ENCODE measurements at regions of chr18 and their contacts with region 1.

Region 1: DNA sequence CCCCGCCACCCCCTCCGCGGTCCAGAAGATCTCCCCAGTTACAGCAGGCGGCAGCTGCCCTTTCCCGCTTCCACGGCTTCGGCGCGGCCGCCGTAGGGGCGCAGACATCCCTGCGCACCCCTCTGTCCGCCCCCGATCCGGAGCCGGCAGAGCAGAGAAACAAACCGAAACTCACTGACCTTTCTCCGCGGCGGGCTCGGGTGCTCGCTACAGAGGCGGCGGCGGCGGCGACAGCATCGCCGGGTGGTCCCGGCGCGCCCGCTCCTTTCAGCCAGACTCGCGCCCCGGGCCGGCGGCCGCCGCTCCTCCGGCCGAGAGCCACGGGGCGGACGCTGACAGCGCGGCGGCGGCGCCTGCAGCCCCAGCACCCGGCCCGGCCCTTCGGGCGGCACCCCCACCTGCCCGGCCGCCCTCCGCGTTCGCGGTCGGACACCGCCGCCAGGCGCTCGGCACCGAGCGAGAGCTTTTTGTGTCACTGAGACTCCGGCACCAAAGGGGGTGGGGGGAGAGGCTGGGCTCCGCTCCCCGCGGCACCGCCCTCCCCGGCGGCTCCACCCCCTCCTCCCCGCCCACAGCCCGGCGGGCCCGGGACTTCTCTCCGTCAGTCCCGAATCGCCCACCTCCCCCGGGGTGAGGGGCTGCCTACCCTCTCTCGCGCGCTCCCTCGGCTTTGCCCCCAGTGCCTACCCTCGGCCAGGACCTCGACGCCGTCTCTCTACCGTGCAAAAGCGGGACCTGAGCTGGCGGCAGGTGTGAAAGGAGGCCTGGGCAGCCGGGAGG is 1.4 kb upstream of the RNF152 start:
- DNase-seq: peak; percentile 87 to 92 (median 89)
- ATAC-seq: peak; percentile 92 to 95 (median 94)
- H3K4me3 ChIP-seq: peak overlapping the region; percentile 74 to 99 (median 93)
- H3K27ac ChIP-seq: peak overlapping the region; percentile 80 to 97 (median 90)
- H3K4me1 ChIP-seq: peaks cover 0 to 43% (median 8%) of the 10 kb centered on the region in 12 donors
- H3K27me3 ChIP-seq: peaks cover 0 to 38% (median 0%) of the 10 kb centered on the region in 9 donors
- CTCF ChIP-seq: peak; percentile 7 to 67 (median 46)
- POLR2A ChIP-seq: peak in 1 of 2 donors; percentile 70

Region 2: DNA sequence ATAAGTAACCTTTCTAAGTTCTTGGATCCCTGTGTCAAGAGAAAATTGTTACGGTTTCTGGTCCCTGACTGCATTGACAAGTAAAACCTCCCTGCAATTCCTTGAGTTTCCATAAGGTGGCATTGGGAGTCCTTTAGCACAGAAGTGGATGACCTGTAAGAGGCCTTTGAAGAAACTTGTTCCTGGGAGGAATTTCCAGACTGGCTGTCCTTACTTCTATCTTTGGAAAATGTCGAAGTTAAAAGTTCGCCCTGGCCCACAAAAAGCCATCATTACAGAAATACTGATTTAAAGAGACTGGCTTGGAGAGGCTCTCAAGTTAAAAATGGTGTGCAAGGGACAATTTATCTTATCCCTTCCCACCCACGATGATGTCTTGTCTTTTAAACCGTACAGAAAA is 342.6 kb before region 1 on chr18:
- intact Hi-C with region 1: loop called in 3 of 10 experiments (anchors 2 to 10 kb)
- DNase-seq: peak in 2 of 5 donors; percentile 47 to 56
- ATAC-seq: peak; percentile 78 to 85 (median 80)
- H3K4me3 ChIP-seq: no peak overlapping the region
- H3K27ac ChIP-seq: no peak overlapping the region
- H3K4me1 ChIP-seq: peaks cover 0 to 8% (median 0%) of the 10 kb centered on the region in 12 donors
- H3K27me3 ChIP-seq: no peaks in the 10 kb centered on the region
- CTCF ChIP-seq: peak; percentile 72 to 92 (median 88)
- POLR2A ChIP-seq: no peak

Region 3: DNA sequence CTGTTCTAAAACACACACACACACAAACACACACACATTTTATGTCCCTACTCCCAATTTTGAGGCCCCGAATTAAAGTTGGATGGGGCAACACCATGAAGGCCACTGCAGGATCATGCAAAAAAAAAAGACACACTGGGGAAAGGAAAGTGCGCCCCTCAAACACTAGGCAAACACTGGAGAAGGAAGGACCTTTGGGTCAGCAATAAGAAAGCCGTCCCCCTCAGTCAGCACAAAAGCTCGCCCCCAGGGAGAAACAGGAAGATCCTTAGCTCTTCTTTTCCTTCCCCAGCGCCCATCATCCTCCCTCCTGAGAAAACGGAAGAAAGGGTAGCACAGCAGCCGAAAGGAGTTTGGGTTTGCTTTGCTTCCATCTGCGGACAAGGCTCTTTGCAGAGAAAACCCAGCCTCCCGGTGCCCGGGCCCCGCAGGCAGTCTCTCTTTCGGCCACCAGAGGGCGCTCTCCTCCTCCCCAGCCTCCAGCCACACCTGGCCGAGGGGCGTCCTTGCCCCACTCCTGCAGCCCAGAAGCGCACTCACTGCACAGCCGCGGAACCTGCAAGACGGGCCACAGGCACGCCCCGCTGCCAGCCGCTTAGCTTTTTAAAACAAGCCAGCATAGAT is 312.5 kb before region 1 on chr18:
- intact Hi-C with region 1: loop called in 6 of 10 experiments (anchors 2 to 10 kb)
- DNase-seq: peak; percentile 73 to 88 (median 75)
- ATAC-seq: peak; percentile 83 to 93 (median 90)
- H3K4me3 ChIP-seq: peak overlapping the region in 11 of 12 donors; percentile 28 to 58 (median 49)
- H3K27ac ChIP-seq: peak overlapping the region in 11 of 12 donors; percentile 55 to 84 (median 71)
- H3K4me1 ChIP-seq: peaks cover 0 to 40% (median 16%) of the 10 kb centered on the region in 12 donors
- H3K27me3 ChIP-seq: no peaks in the 10 kb centered on the region
- CTCF ChIP-seq: peak; percentile 99 to 100 (median 99)
- POLR2A ChIP-seq: no peak

Region 4: GRCh38 chr18:61679836-61680235 is 214.3 kb before region 1 on chr18:
- intact Hi-C with region 1: loop called in 1 of 10 experiments (anchors 5 kb)
- DNase-seq: no peak
- ATAC-seq: no peak
- H3K4me3 ChIP-seq: no peak overlapping the region
- H3K27ac ChIP-seq: no peak overlapping the region
- H3K4me1 ChIP-seq: peaks cover 0 to 2% (median 0%) of the 10 kb centered on the region in 12 donors
- H3K27me3 ChIP-seq: no peaks in the 10 kb centered on the region
- CTCF ChIP-seq: no peak
- POLR2A ChIP-seq: no peak

Region 5: DNA sequence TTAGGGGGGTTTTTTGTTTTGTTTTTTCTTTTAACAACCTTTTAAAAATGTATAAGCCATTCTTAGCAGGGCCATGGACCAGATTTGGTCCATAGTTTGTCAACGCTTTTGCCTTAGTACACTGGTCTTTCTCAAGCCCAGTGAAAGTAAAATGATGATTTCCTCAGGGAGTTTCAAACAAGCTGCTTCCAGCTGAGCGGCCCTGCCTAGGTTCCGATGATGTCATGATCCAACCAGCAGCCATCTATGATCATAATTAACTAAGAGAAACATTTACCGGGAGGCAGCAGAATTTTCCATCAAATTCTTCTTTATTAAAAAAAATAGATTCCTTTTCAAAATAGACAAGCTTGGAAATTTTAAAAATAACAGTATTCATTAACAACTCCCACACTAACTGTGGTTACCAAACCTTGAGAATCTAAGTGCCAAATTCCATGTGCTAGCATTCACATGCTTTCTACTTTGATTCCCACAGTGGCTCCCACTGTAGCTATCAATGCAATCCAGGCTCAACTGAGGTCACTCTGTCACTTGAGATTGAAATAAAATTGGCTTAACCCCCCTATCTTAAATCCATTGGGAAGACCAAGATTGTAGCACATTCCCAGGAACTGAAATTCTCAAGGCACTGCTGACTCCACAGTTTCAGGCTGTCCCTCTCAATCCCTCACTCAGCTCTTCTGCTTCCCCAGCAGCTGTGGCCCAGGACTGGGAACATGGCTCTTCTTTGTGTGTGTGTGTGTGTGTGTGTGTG is 150.2 kb before region 1 on chr18:
- intact Hi-C with region 1: loop called in 9 of 10 experiments (anchors 5 to 10 kb)
- DNase-seq: peak in 4 of 5 donors; percentile 51 to 70 (median 68)
- ATAC-seq: peak; percentile 63 to 78 (median 70)
- H3K4me3 ChIP-seq: no peak overlapping the region
- H3K27ac ChIP-seq: peak overlapping the region; percentile 66 to 95 (median 85)
- H3K4me1 ChIP-seq: peaks cover 0 to 74% (median 32%) of the 10 kb centered on the region in 12 donors
- H3K27me3 ChIP-seq: no peaks in the 10 kb centered on the region
- CTCF ChIP-seq: no peak
- POLR2A ChIP-seq: no peak

Region 6: DNA sequence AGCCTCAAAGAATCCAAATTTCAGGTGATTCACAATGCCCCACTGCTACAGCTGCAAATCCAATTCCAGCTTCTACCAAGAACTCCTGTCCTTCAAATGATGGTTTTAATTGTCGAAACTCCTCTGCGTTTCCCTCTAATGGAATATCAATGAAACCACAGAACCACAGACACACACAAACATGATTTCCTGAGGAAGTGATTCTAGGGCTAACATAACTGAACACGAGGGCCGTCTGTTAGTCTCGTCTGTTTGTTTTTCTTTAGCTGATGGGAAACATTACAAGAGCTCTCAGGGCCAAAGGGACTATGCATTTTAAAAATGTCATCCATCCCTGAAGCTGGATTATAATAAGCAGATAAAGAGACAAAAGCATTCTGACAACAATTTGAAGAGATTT is 60.8 kb before region 1 on chr18:
- intact Hi-C with region 1: loop called in 3 of 10 experiments (anchors 5 to 10 kb)
- DNase-seq: no peak
- ATAC-seq: peak in 3 of 4 donors; percentile 44 to 79 (median 51)
- H3K4me3 ChIP-seq: peak overlapping the region in 3 of 12 donors; percentile 1 to 18 (median 15)
- H3K27ac ChIP-seq: peak overlapping the region in 9 of 12 donors; percentile 13 to 71 (median 49)
- H3K4me1 ChIP-seq: peaks cover 0 to 68% (median 36%) of the 10 kb centered on the region in 12 donors
- H3K27me3 ChIP-seq: peaks cover 0 to 34% (median 0%) of the 10 kb centered on the region in 9 donors
- CTCF ChIP-seq: no peak
- POLR2A ChIP-seq: no peak

Measured in heart left ventricle (tissue), 16 donors.